ENCODE measurements at regions of chr5 and their contacts with region 1.

Region 1: GRCh38 chr5:164214698-164215097 is 709.3 kb downstream of the MAT2B start:
- DNase-seq: no peak
- ATAC-seq: no peak

Region 2: GRCh38 chr5:164153469-164154172 is 61.1 kb before region 1 on chr5:
- intact Hi-C with region 1: loop called in 1 of 2 experiments (anchors 10 kb)
- DNase-seq: no peak
- ATAC-seq: no peak

Region 3: GRCh38 chr5:164265566-164265965 is 50.9 kb after region 1 on chr5:
- intact Hi-C with region 1: no loop called
- DNase-seq: no peak
- ATAC-seq: no peak

Measured in left cardiac atrium (tissue), 4 donors.